AG04450 (cell line): ENCODE measurements at regions of chr5 and their contacts with region 1.

Region 1: GRCh38 chr5:122947372-122947771 is 89.2 kb downstream of the PPIC start:
- DNase-seq: no peak
- H3K4me3 ChIP-seq: no peak overlapping the region
- H3K27ac ChIP-seq: no peak overlapping the region
- H3K27me3 ChIP-seq: no peaks in the 10 kb centered on the region
- CTCF ChIP-seq: no peak

Region 2: DNA sequence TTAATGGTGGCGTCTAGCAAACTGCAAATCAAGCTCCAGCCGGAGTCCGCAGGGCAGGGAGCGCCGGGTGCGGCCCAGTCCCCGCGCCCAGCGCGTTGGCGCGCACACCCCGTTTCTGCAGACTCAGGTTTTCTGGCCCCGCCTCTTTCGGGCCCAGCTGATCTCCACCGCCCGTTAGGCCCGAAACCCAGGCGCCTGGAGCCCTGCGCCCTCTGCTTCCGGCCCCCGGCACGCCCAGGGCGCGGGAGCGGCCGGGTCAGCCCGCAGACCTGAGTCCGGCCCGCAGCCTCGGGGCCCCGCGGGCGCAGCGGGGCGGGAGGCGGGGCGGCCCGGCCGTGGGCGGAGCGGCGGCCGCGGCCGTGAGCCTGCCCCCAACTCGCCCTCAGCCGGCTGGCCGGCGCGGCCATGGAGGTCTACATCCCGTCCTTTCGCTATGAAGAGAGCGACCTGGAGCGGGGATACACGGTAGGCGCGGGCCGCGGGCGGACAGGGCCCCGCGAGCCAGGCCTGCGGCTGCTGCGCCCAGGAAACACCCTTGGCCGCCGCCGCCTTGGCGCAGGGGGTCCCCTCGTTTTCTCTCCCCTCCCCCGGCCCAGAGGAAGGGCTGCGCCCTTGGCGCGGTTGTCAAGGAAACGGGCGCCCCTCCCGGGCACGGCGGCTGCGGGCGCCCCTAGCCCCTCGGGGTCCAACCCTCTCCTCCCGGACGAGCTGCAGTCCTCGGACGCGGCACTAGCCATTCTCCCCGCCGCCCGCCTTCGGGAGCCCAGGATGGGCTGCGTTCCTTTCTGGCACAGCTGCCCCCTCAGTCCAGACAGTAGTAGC is 101.9 kb before region 1 on chr5 and contains the start of gene SNX24:
- CTCF ChIA-PET with region 1: no interaction called
- POLR2A ChIA-PET with region 1: interaction called, 10 read pairs
- DNase-seq: peak; percentile 10
- H3K4me3 ChIP-seq: peak within 1 kb of the TSS; percentile 71
- H3K27ac ChIP-seq: peak within 1 kb of the TSS; percentile 66
- H3K27me3 ChIP-seq: no peaks in the 10 kb centered on the region
- CTCF ChIP-seq: no peak
- polyA plus RNA-seq, gene SNX24: 11.8 and 14.8 TPM in 2 replicates

Region 3: GRCh38 chr5:122882837-122883236 is 64.5 kb before region 1 on chr5:
- CTCF ChIA-PET with region 1: no interaction called
- POLR2A ChIA-PET with region 1: no interaction called
- DNase-seq: no peak
- H3K4me3 ChIP-seq: no peak overlapping the region
- H3K27ac ChIP-seq: no peak overlapping the region
- H3K27me3 ChIP-seq: no peaks in the 10 kb centered on the region
- CTCF ChIP-seq: no peak